ENCODE measurements at regions of chr2 and their contacts with region 1.

Region 1: GRCh38 chr2:214809751-214810564 is 475 bp upstream of the BARD1 start:
- DNase-seq: peak; percentile 99
- H3K4me3 Mint-ChIP-seq: peak overlapping the region; percentile 96
- H3K27ac Mint-ChIP-seq: peak overlapping the region; percentile 70
- H3K4me1 Mint-ChIP-seq: peaks cover 24% of the 10 kb centered on the region
- H3K27me3 Mint-ChIP-seq: peaks cover 4% of the 10 kb centered on the region

Region 2: GRCh38 chr2:214679736-214680135 is 130.2 kb before region 1 on chr2:
- CTCF ChIA-PET with region 1: no interaction called
- intact Hi-C with region 1: loop called (anchors 5 kb)
- DNase-seq: no peak
- H3K4me3 Mint-ChIP-seq: no peak overlapping the region
- H3K27ac Mint-ChIP-seq: no peak overlapping the region
- H3K4me1 Mint-ChIP-seq: peaks cover 8% of the 10 kb centered on the region
- H3K27me3 Mint-ChIP-seq: peaks cover 3% of the 10 kb centered on the region

Region 3: DNA sequence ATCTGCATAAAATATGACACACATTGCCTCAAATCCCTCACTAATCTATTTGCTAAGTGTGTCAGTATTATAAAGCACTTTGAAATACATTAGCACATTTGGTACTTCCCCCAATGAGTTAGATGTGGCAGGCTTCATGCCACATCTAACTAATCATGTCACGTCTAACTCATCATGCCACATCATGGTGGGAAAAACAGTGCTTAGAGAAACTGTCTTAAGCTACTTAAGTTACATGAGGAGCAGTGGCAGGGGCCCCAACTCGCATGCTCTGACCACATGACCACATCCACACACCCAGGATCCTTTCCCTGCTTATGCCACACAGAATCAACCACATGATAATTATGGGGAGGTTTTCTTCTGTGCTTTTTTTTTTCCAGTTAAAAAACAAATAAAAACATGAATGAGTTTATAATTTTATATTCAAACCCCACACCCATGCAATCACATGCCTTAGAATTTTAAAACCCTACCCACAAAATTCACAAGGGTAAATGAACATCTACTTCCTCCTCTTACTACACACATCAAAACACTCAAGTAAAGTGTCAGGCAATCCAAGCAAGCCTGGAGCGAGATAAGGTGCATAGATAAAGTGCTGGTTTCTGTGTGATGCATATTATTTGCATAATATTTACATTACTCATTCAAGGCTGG is 326.8 kb after region 1 on chr2:
- CTCF ChIA-PET with region 1: no interaction called
- intact Hi-C with region 1: loop called (anchors 2 kb)
- DNase-seq: peak; percentile 14
- H3K4me3 Mint-ChIP-seq: no peak overlapping the region
- H3K27ac Mint-ChIP-seq: no peak overlapping the region
- H3K4me1 Mint-ChIP-seq: no peaks in the 10 kb centered on the region
- H3K27me3 Mint-ChIP-seq: peaks cover 14% of the 10 kb centered on the region

Region 4: DNA sequence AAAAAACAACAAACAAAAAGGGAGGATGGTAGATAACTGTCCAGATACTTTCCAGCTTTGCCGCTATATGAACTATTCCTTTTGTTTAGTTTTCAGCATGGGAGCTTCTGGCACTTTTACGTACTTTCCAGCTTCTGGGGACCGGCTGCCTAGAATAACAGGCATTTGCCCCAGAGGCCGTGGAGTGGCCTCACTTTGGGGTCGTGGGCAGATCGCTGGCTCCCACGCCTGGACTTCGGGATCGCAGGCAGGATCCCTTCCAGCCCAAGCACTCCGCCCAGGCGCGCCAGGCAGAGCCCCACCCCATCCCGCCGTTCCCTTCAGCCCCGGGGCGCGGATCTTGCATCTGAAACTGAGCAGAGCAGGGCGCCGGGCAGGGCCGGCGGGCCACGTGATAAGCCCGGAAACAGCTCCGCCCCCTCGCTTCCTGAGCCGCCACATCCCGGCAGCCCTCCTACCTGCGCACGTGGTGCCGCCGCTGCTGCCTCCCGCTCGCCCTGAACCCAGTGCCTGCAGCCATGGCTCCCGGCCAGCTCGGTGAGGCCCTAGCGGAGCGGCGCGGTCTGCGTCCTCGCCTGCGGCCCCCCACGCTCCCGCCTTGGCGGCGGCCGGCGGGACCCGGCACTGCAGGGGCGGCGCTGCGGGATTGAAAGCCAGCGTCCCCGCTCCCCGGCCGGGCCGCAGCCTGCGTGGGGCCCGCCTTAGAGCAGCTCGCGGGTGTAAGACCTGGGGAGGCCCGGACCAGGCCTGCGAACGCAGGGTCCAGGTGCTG is 501.9 kb after region 1 on chr2 and contains the start of gene ATIC:
- CTCF ChIA-PET with region 1: no interaction called
- intact Hi-C with region 1: loop called (anchors 1 kb)
- DNase-seq: peak; percentile 94
- H3K4me3 Mint-ChIP-seq: peak within 1 kb of the TSS; percentile 94
- H3K27ac Mint-ChIP-seq: peak within 1 kb of the TSS; percentile 90
- H3K4me1 Mint-ChIP-seq: peaks cover 36% of the 10 kb centered on the region
- H3K27me3 Mint-ChIP-seq: no peaks in the 10 kb centered on the region
- total RNA-seq, gene ATIC: 281 to 305 TPM

Region 5: GRCh38 chr2:216013080-216013909 is 1203.3 kb after region 1 on chr2 and contains the start of gene MREG:
- CTCF ChIA-PET with region 1: no interaction called
- intact Hi-C with region 1: loop called (anchors 2 kb)
- DNase-seq: peak; percentile 91
- H3K4me3 Mint-ChIP-seq: peak within 1 kb of the TSS; percentile 81
- H3K27ac Mint-ChIP-seq: no peak within 1 kb of the TSS
- H3K4me1 Mint-ChIP-seq: peaks cover 51% of the 10 kb centered on the region
- H3K27me3 Mint-ChIP-seq: no peaks in the 10 kb centered on the region
- total RNA-seq, gene MREG: 3.1 to 3.9 TPM

Region 6: GRCh38 chr2:216412022-216412999 is 1602.4 kb after region 1 on chr2 and contains the start of gene SMARCAL1:
- CTCF ChIA-PET with region 1: no interaction called
- intact Hi-C with region 1: loop called (anchors 10 kb)
- DNase-seq: peak; percentile 100
- H3K4me3 Mint-ChIP-seq: peak within 1 kb of the TSS; percentile 92
- H3K27ac Mint-ChIP-seq: peak within 1 kb of the TSS; percentile 90
- H3K4me1 Mint-ChIP-seq: peaks cover 6% of the 10 kb centered on the region
- H3K27me3 Mint-ChIP-seq: no peaks in the 10 kb centered on the region
- total RNA-seq, gene SMARCAL1: 17.0 to 18.2 TPM